Activated naive CD4-positive, alpha-beta T cell treated with anti-CD3 and anti-CD28 coated beads for 36 hours (primary cell): ENCODE measurements at regions of chrX and their contacts with region 1.

Region 1: DNA sequence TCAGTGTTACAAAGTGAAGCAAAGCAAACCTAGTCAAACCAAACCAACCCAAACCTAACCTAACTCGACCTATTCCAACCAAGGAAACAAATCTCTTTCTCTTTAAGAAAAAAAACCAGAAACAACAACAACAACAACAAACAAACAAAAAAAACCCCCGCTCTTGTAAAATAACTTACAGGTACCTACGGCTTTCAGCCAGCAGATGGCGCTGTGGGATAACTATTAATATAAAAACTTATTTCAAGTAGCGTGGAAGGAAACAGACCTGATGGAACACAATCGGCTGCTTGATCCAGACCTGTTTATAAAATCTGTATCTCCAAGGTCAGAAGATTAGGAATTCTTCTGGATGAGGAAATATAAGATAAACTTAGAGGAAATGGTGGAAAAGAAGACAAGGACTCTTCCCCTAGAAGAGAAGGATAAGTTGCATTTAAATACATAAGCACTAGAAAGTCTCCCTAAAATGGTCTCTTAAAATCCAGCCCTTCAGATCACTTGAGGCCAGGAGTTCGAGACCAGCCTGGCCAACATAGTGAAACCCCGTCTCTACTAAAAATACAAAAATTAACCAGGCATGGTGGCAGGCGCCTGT is 34.4 kb upstream of the CDKL5 start:
- DNase-seq: peak; percentile 70
- H3K4me3 Mint-ChIP-seq: no peak overlapping the region
- H3K27ac Mint-ChIP-seq: no peak overlapping the region
- H3K4me1 Mint-ChIP-seq: no peaks in the 10 kb centered on the region
- H3K27me3 Mint-ChIP-seq: no peaks in the 10 kb centered on the region

Region 2: GRCh38 chrX:18899796-18900447 is 508.9 kb after region 1 on chrX:
- CTCF ChIA-PET with region 1: no interaction called
- intact Hi-C with region 1: loop called (anchors 5 kb)
- DNase-seq: peak; percentile 26
- H3K4me3 Mint-ChIP-seq: no peak overlapping the region
- H3K27ac Mint-ChIP-seq: no peak overlapping the region
- H3K4me1 Mint-ChIP-seq: peaks cover 3% of the 10 kb centered on the region
- H3K27me3 Mint-ChIP-seq: no peaks in the 10 kb centered on the region

Region 3: DNA sequence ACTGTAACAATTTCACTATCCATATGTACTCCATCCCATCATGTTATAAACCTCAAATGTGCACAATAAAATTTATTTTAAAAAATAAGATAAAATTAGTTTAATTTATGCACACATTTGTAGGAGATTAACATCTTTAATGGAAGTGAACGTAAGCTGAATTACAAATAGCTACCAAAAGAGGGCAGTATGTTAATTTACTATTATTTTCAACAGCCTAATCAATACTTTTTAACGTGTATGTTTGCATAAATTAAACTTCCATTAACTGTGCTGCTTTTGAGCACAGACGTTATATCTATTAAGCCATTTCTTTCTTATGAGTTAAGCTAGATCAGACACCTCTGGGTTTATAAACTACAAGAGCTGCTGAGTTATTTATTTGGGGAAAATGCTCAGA is 649.3 kb after region 1 on chrX:
- CTCF ChIA-PET with region 1: no interaction called
- intact Hi-C with region 1: loop called (anchors 5 kb)
- DNase-seq: no peak
- H3K4me3 Mint-ChIP-seq: no peak overlapping the region
- H3K27ac Mint-ChIP-seq: no peak overlapping the region
- H3K4me1 Mint-ChIP-seq: no peaks in the 10 kb centered on the region
- H3K27me3 Mint-ChIP-seq: no peaks in the 10 kb centered on the region

Region 4: DNA sequence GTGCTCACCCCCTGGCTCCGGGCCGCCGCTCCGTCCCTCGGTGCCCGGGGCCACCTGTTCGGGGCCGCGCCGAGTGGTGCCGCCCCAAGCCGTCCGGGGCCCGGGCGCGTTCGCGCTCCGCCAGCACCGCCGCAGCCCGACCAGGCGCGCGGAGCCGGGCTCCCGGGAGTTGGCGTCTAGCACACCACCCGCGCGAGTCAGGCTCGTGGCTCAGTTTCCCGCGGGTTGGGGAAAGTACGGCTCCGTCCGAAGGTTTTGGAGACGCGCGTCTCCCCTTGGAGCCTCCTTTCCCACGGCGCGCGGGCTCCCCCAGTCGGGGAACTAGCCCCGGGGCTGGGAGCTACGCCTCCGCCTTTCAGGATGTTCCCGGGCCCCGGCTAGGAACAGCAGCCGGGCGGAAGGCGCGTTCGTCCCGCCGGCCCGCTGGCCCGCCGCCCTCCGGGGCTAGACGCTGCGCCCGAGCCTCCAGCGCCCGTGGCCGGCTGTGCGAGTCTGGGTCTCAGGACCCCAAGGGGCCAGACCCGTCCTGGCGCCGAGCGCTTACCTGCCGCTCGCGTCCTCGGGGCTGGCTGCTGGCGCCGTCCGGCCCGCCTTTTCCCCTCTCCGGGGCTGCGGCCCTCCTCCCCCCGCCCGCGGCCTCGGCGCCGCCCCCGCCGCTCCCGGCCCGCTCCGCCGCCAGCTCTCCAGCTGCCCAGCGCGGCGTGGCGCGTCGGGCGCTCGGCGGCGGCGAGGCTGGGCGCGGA is 731.0 kb after region 1 on chrX and contains the start of gene ADGRG2:
- CTCF ChIA-PET with region 1: no interaction called
- intact Hi-C with region 1: loop called (anchors 5 kb)
- DNase-seq: no peak
- H3K4me3 Mint-ChIP-seq: no peak within 1 kb of the TSS
- H3K27ac Mint-ChIP-seq: no peak within 1 kb of the TSS
- H3K4me1 Mint-ChIP-seq: no peaks in the 10 kb centered on the region
- H3K27me3 Mint-ChIP-seq: peaks cover 27% of the 10 kb centered on the region
- total RNA-seq, gene ADGRG2: not detected

Region 5: DNA sequence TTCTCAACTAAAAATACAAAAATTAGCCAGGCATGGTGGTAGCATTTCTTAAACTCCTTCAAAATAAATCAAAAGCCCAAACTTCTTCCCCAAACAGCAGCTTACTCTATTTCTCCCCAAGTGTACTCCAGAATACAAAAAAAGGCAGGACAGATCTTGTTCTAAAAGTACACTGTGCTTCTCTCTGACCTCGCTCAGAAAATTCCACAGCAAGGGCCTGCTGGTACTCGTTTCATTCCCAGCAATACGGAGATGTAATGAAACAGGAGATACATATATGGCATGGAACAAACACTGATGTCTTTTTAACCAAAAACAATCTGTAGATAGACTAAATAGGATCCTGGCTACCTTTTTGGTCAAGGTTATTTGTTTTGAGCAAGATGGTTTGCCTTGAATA is 1700.5 kb after region 1 on chrX:
- CTCF ChIA-PET with region 1: no interaction called
- intact Hi-C with region 1: no loop called
- DNase-seq: no peak
- H3K4me3 Mint-ChIP-seq: no peak overlapping the region
- H3K27ac Mint-ChIP-seq: no peak overlapping the region
- H3K4me1 Mint-ChIP-seq: no peaks in the 10 kb centered on the region
- H3K27me3 Mint-ChIP-seq: no peaks in the 10 kb centered on the region